HAP-1 (cell line): ENCODE measurements at regions of chr1 and their contacts with region 1.

Region 1: GRCh38 chr1:211133836-211134669 is at the start of gene KCNH1:
- DNase-seq: peak; percentile 74 to 91
- H3K4me3 ChIP-seq: no peak within 1 kb of the TSS
- H3K4me1 ChIP-seq: no peaks in the 10 kb centered on the region
- H3K27me3 ChIP-seq: peaks cover 43% of the 10 kb centered on the region

Region 2: GRCh38 chr1:210415846-210416448 is 718.1 kb before region 1 on chr1:
- in situ Hi-C with region 1: loop called (anchors 10 kb)
- DNase-seq: no peak
- H3K4me3 ChIP-seq: no peak overlapping the region
- H3K4me1 ChIP-seq: no peaks in the 10 kb centered on the region
- H3K27me3 ChIP-seq: no peaks in the 10 kb centered on the region

Region 3: GRCh38 chr1:210448297-210448892 is 685.7 kb before region 1 on chr1:
- in situ Hi-C with region 1: loop called (anchors 10 kb)
- DNase-seq: peak; percentile 58 to 65
- H3K4me3 ChIP-seq: no peak overlapping the region
- H3K4me1 ChIP-seq: no peaks in the 10 kb centered on the region
- H3K27me3 ChIP-seq: 0 out of 2 replicates have a peak, but pooled peaks cover 7% of the 10 kb centered on the region

Region 4: DNA sequence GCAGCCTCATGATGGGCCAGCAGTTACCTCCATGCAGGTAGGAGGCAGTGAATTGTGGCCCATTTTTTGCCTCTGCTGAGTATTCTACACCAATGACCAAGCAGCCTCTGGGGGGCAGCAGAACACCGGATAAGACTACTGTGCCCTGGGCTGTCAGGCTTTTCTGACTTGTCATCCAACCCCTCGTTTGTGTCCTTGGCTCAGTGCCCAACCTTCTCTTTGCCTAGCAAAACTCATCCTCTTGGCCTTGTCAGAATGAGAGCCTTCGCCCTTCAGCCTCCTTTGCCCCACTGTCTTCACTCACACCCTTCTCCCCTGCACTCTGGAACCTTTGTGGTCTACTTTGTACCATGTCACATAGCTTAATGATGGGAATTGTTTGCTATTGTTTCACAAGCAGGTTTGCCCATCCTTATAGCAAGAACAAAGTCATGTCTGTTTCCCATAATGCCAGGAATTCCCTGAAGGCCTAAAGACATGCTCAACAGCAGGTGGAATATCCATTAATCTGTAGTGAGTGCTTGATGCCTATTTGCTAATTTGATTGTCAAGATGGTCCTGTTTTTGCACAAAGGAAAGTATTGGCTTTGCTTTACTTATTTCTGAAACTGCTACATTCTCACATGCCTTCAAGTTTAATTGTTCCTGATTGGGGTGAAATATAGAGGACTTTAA is 549.5 kb before region 1 on chr1:
- in situ Hi-C with region 1: loop called (anchors 25 kb)
- DNase-seq: peak; percentile 70 to 90
- H3K4me3 ChIP-seq: no peak overlapping the region
- H3K4me1 ChIP-seq: no peaks in the 10 kb centered on the region; the same call in 1 of the 2 replicates
- H3K27me3 ChIP-seq: 0 out of 2 replicates have a peak, but pooled peaks cover 5% of the 10 kb centered on the region